Naive thymus-derived CD4-positive, alpha-beta T cell (primary cell): ENCODE measurements at regions of chr1 and their contacts with region 1.

Region 1: DNA sequence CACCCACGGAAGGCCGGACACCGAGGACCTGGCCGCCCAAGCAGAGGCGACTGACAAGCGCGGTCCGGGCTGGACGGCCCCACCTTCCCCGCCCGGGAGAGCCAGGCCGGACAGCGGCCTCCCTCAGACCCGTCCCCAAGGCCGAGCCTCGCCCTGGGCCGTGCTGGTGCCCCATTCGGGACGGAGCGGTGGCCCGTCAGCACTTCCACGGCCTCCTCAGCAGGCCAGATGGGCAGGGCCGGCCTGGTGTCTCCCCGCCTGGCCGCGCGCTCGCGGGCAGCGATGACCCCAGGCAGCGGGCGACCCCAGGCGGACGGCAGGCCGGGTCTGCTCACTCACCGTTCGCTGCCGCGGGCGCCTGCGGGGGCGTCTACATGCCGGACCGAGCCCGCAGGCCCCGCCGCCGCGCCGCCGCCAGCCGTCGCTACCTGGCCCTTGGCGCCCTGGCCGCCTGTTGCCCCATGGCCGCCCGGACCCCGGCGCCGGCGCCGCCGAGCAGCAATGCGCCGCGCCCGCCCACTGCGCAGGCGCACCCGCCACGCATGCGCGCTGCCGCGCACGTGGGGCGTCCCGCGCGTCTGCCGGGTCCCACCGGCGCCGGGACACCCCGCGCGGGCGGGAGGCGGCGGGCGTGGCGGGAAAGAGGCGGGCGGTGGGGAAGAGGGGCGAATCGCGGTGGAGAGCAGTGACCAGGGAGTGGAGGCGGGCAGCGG is at the start of gene NADK:
- DNase-seq: peak; percentile 59 to 92 (median 79)
- ATAC-seq: peak; percentile 62
- H3K4me3 ChIP-seq: peak within 1 kb of the TSS; percentile 74
- H3K4me3 Mint-ChIP-seq: peak within 1 kb of the TSS; percentile 84 to 95 (median 90)
- H3K27ac ChIP-seq: peak within 1 kb of the TSS; percentile 81
- H3K27ac Mint-ChIP-seq: peak within 1 kb of the TSS; percentile 94 to 97 (median 95)
- H3K4me1 ChIP-seq: peaks cover 47 to 61% of the 10 kb centered on the region in 2 donors
- H3K4me1 Mint-ChIP-seq: peaks cover 51 to 65% (median 59%) of the 10 kb centered on the region in 7 donors
- H3K27me3 ChIP-seq: no peaks in the 10 kb centered on the region
- H3K27me3 Mint-ChIP-seq: no peaks in the 10 kb centered on the region
- total RNA-seq, gene NADK: 45.2 to 115 (median 50.3) TPM

Region 2: DNA sequence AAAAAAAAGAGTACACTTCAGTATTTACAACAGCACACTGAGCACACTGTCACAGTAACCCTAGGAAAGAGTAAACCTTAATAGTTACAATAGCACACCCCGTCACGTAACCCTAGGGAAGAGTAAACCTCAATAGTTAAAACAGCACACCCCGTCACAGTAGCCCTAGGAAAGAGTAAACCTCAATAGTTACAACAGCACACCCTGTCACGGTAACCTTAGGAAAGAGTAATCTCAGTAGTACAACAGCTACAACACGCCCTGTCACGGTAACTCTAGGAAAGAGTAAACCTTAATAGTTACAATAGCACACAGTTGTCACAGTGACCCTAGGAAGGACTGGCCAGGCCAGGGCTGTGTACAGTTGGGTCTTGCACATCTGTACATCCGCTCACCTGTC is 56.9 kb before region 1 on chr1:
- CTCF ChIA-PET with region 1: no interaction called
- POLR2A ChIA-PET with region 1: interaction called, 5 read pairs
- intact Hi-C with region 1: loop called in 1 of 2 experiments (anchors 2 kb)
- DNase-seq: no peak
- ATAC-seq: no peak
- H3K4me3 ChIP-seq: no peak overlapping the region
- H3K4me3 Mint-ChIP-seq: peak overlapping the region in 2 of 10 donors; percentile 4 to 43
- H3K27ac ChIP-seq: no peak overlapping the region
- H3K27ac Mint-ChIP-seq: peak overlapping the region in 5 of 9 donors; percentile 28 to 67 (median 51)
- H3K4me1 ChIP-seq: no peaks in the 10 kb centered on the region
- H3K4me1 Mint-ChIP-seq: peaks cover under 1 to 18% (median 12%) of the 10 kb centered on the region in 7 donors
- H3K27me3 ChIP-seq: no peaks in the 10 kb centered on the region
- H3K27me3 Mint-ChIP-seq: peaks cover 0 to 4% (median 0%) of the 10 kb centered on the region in 5 donors

Region 3: GRCh38 chr1:1796466-1796865 is 18.4 kb after region 1 on chr1:
- CTCF ChIA-PET with region 1: no interaction called
- POLR2A ChIA-PET with region 1: interaction called, 5 read pairs
- intact Hi-C with region 1: loop called in 1 of 2 experiments (anchors 2 kb)
- DNase-seq: peak in 3 of 9 donors; percentile 27 to 40 (median 27)
- ATAC-seq: peak; percentile 51
- H3K4me3 ChIP-seq: no peak overlapping the region
- H3K4me3 Mint-ChIP-seq: no peak overlapping the region
- H3K27ac ChIP-seq: no peak overlapping the region
- H3K27ac Mint-ChIP-seq: peak overlapping the region in 7 of 9 donors; percentile 18 to 81 (median 58)
- H3K4me1 ChIP-seq: no peaks in the 10 kb centered on the region
- H3K4me1 Mint-ChIP-seq: peaks cover 8 to 27% (median 11%) of the 10 kb centered on the region in 7 donors
- H3K27me3 ChIP-seq: no peaks in the 10 kb centered on the region
- H3K27me3 Mint-ChIP-seq: no peaks in the 10 kb centered on the region

Region 4: GRCh38 chr1:1890506-1891348 is 112.6 kb after region 1 on chr1 and contains the start of gene GNB1:
- CTCF ChIA-PET with region 1: no interaction called
- POLR2A ChIA-PET with region 1: interaction called, 4 read pairs
- intact Hi-C with region 1: loop called (anchors 1 to 2 kb)
- DNase-seq: peak; percentile 80 to 96 (median 93)
- ATAC-seq: peak; percentile 88
- H3K4me3 ChIP-seq: peak within 1 kb of the TSS; percentile 64
- H3K4me3 Mint-ChIP-seq: peak within 1 kb of the TSS; percentile 83 to 100 (median 90)
- H3K27ac ChIP-seq: peak within 1 kb of the TSS; percentile 96
- H3K27ac Mint-ChIP-seq: peak within 1 kb of the TSS; percentile 89 to 98 (median 95)
- H3K4me1 ChIP-seq: peaks cover 36 to 52% of the 10 kb centered on the region in 2 donors
- H3K4me1 Mint-ChIP-seq: peaks cover 41 to 76% (median 61%) of the 10 kb centered on the region in 7 donors
- H3K27me3 ChIP-seq: no peaks in the 10 kb centered on the region
- H3K27me3 Mint-ChIP-seq: peaks cover 0 to under 1% (median 0%) of the 10 kb centered on the region in 5 donors
- total RNA-seq, gene GNB1: 170 to 358 (median 246) TPM